Naive thymus-derived CD8-positive, alpha-beta T cell (primary cell): ENCODE measurements at regions of chr12 and their contacts with region 1.

Region 1: GRCh38 chr12:685388-685787 is 22.1 kb upstream of the NINJ2 start:
- DNase-seq: peak; percentile 63 to 95 (median 91)
- ATAC-seq: peak; percentile 92 to 96
- H3K4me3 Mint-ChIP-seq: peak overlapping the region; percentile 25 to 84 (median 62)
- H3K27ac Mint-ChIP-seq: peak overlapping the region; percentile 92 to 100 (median 99)
- H3K4me1 Mint-ChIP-seq: peaks cover 21 to 47% (median 41%) of the 10 kb centered on the region in 4 donors
- H3K27me3 Mint-ChIP-seq: no peaks in the 10 kb centered on the region

Region 2: GRCh38 chr12:442235-442884 is 243.0 kb before region 1 on chr12:
- POLR2A ChIA-PET with region 1: no interaction called
- DNase-seq: peak in 8 of 10 donors; percentile 14 to 56 (median 42)
- ATAC-seq: no peak
- H3K4me3 Mint-ChIP-seq: no peak overlapping the region
- H3K27ac Mint-ChIP-seq: no peak overlapping the region
- H3K4me1 Mint-ChIP-seq: no peaks in the 10 kb centered on the region
- H3K27me3 Mint-ChIP-seq: peaks cover 2 to 10% (median 5%) of the 10 kb centered on the region in 5 donors

Region 3: DNA sequence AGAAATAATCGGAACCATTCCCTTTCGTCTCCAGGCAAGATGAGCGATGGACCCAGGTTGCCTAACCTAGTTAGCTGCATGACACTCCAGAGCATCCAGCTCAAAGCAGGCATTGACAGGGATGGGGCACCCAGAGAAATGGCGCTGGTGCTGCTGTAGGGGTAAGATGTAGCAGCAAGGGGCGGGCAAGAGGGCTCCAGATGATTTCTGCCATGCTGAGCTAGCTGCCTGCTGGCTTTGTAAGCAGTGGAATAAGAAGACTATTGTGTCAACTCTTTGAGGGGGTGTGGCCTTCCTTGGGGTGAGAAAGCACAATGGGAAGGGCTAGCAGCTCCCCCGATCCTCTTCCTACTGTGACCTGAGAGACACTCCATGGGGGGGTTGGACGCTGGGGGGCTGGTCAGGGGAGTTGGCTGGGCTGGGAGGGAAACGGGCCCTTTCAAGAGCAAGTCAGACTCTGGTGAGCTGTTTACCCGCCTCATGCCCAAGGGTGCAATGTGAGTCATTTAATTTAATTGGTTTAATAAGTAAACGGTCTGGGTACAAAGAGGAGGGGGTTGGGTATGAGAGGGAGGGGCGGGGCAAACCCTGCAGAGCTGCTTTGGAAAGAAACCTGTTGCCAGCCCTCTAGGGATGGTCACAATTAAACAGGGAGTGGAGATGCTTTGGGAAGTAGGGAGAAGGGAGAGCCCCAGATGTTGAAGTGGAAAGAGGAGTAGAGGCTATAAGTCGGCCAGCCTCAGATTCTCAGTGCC is 175.1 kb before region 1 on chr12:
- POLR2A ChIA-PET with region 1: no interaction called
- DNase-seq: no peak
- ATAC-seq: no peak
- H3K4me3 Mint-ChIP-seq: no peak overlapping the region
- H3K27ac Mint-ChIP-seq: peak overlapping the region in 1 of 10 donors; percentile 9
- H3K4me1 Mint-ChIP-seq: no peaks in the 10 kb centered on the region
- H3K27me3 Mint-ChIP-seq: peaks cover 11 to 16% (median 15%) of the 10 kb centered on the region in 5 donors

Region 4: GRCh38 chr12:642633-643474 is 42.5 kb before region 1 on chr12:
- POLR2A ChIA-PET with region 1: interaction called, 10 read pairs
- DNase-seq: peak; percentile 52 to 84 (median 72)
- ATAC-seq: peak; percentile 81 to 84
- H3K4me3 Mint-ChIP-seq: peak overlapping the region; percentile 73 to 92 (median 84)
- H3K27ac Mint-ChIP-seq: peak overlapping the region; percentile 90 to 98 (median 94)
- H3K4me1 Mint-ChIP-seq: peaks cover 24 to 72% (median 59%) of the 10 kb centered on the region in 4 donors
- H3K27me3 Mint-ChIP-seq: no peaks in the 10 kb centered on the region

Region 5: GRCh38 chr12:674272-674781 is 11.1 kb before region 1 on chr12:
- POLR2A ChIA-PET with region 1: interaction called, 14 read pairs
- DNase-seq: peak in 9 of 10 donors; percentile 24 to 80 (median 61)
- ATAC-seq: peak; percentile 90 to 93
- H3K4me3 Mint-ChIP-seq: peak overlapping the region; percentile 36 to 81 (median 72)
- H3K27ac Mint-ChIP-seq: peak overlapping the region; percentile 73 to 94 (median 88)
- H3K4me1 Mint-ChIP-seq: peaks cover 26 to 59% (median 39%) of the 10 kb centered on the region in 4 donors
- H3K27me3 Mint-ChIP-seq: no peaks in the 10 kb centered on the region

Region 6: GRCh38 chr12:726281-727140 is 41.1 kb after region 1 on chr12:
- POLR2A ChIA-PET with region 1: interaction called, 14 read pairs
- DNase-seq: peak in 2 of 10 donors; percentile 43 to 44
- ATAC-seq: peak; percentile 43 to 71
- H3K4me3 Mint-ChIP-seq: peak overlapping the region in 6 of 10 donors; percentile 0 to 71 (median 53)
- H3K27ac Mint-ChIP-seq: peak overlapping the region; percentile 78 to 92 (median 90)
- H3K4me1 Mint-ChIP-seq: peaks cover 38 to 82% (median 78%) of the 10 kb centered on the region in 4 donors
- H3K27me3 Mint-ChIP-seq: no peaks in the 10 kb centered on the region

Region 7: GRCh38 chr12:779745-780734 is 94.7 kb after region 1 on chr12:
- POLR2A ChIA-PET with region 1: no interaction called
- DNase-seq: no peak
- ATAC-seq: peak in 1 of 2 donors; percentile 46
- H3K4me3 Mint-ChIP-seq: peak overlapping the region; percentile 68 to 83 (median 74)
- H3K27ac Mint-ChIP-seq: peak overlapping the region in 7 of 10 donors; percentile 3 to 86 (median 76)
- H3K4me1 Mint-ChIP-seq: peaks cover 24 to 79% (median 76%) of the 10 kb centered on the region in 4 donors
- H3K27me3 Mint-ChIP-seq: no peaks in the 10 kb centered on the region